ENCODE measurements at regions of chr10 and their contacts with region 1.

Region 1: GRCh38 chr10:130127364-130128061 is 8.7 kb upstream of the GLRX3 start:
- DNase-seq: peak in 8 of 9 donors; percentile 24 to 60 (median 46)
- ATAC-seq: peak; percentile 92
- H3K4me3 ChIP-seq: no peak overlapping the region
- H3K4me3 Mint-ChIP-seq: peak overlapping the region in 2 of 10 donors; percentile 19 to 22
- H3K27ac ChIP-seq: no peak overlapping the region
- H3K27ac Mint-ChIP-seq: no peak overlapping the region
- H3K4me1 ChIP-seq: no peaks in the 10 kb centered on the region
- H3K4me1 Mint-ChIP-seq: peaks cover 0 to 10% (median 7%) of the 10 kb centered on the region in 7 donors
- H3K27me3 ChIP-seq: no peaks in the 10 kb centered on the region
- H3K27me3 Mint-ChIP-seq: peaks cover 9 to 53% (median 17%) of the 10 kb centered on the region in 5 donors

Region 2: GRCh38 chr10:128631801-128632241 is 1495.7 kb before region 1 on chr10:
- CTCF ChIA-PET with region 1: no interaction called
- POLR2A ChIA-PET with region 1: no interaction called
- intact Hi-C with region 1: loop called in 1 of 2 experiments (anchors 5 kb)
- DNase-seq: no peak
- ATAC-seq: no peak
- H3K4me3 ChIP-seq: no peak overlapping the region
- H3K4me3 Mint-ChIP-seq: no peak overlapping the region
- H3K27ac ChIP-seq: no peak overlapping the region
- H3K27ac Mint-ChIP-seq: no peak overlapping the region
- H3K4me1 ChIP-seq: no peaks in the 10 kb centered on the region
- H3K4me1 Mint-ChIP-seq: peaks cover 0 to 4% (median 0%) of the 10 kb centered on the region in 7 donors
- H3K27me3 ChIP-seq: no peaks in the 10 kb centered on the region
- H3K27me3 Mint-ChIP-seq: peaks cover 2 to 49% (median 10%) of the 10 kb centered on the region in 5 donors

Region 3: DNA sequence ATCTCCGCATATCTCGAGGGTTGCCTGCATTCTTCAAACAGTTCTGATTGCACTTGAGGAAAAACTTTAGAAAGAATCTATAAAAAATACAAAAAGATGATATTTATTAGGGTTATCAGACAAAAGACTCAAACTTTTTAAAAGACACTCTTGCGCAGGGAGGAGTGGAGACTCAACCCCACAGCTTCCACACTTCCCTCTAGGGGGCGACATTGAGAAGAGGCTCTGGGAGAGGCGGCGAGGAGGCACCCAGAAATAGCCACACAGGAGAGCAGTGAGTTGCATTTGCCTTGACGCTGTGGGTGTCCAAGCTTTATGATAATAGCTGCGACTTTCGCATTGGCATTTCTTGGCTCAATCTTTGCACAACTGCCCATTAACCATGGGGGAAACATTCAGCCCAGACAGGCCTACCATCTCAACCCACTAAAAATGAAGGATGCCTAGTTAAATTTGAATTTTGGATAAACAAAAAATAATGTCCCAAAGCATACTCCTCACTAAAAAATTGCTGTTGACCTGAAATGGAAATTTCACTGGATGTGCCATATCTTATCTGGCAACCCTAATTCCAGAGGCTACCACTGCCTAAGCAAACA is 249.6 kb before region 1 on chr10:
- CTCF ChIA-PET with region 1: no interaction called
- POLR2A ChIA-PET with region 1: no interaction called
- intact Hi-C with region 1: loop called in 1 of 2 experiments (anchors 2 kb)
- DNase-seq: peak in 7 of 9 donors; percentile 8 to 39 (median 29)
- ATAC-seq: peak; percentile 63
- H3K4me3 ChIP-seq: no peak overlapping the region
- H3K4me3 Mint-ChIP-seq: no peak overlapping the region
- H3K27ac ChIP-seq: no peak overlapping the region
- H3K27ac Mint-ChIP-seq: no peak overlapping the region
- H3K4me1 ChIP-seq: no peaks in the 10 kb centered on the region
- H3K4me1 Mint-ChIP-seq: no peaks in the 10 kb centered on the region
- H3K27me3 ChIP-seq: no peaks in the 10 kb centered on the region
- H3K27me3 Mint-ChIP-seq: peaks cover 0 to 8% (median 3%) of the 10 kb centered on the region in 5 donors

Region 4: GRCh38 chr10:129912166-129912917 is 215.2 kb before region 1 on chr10:
- CTCF ChIA-PET with region 1: no interaction called
- POLR2A ChIA-PET with region 1: no interaction called
- intact Hi-C with region 1: no loop called
- DNase-seq: no peak
- ATAC-seq: no peak
- H3K4me3 ChIP-seq: no peak overlapping the region
- H3K4me3 Mint-ChIP-seq: no peak overlapping the region
- H3K27ac ChIP-seq: no peak overlapping the region
- H3K27ac Mint-ChIP-seq: no peak overlapping the region
- H3K4me1 ChIP-seq: no peaks in the 10 kb centered on the region
- H3K4me1 Mint-ChIP-seq: no peaks in the 10 kb centered on the region
- H3K27me3 ChIP-seq: no peaks in the 10 kb centered on the region
- H3K27me3 Mint-ChIP-seq: no peaks in the 10 kb centered on the region

Measured in naive thymus-derived CD4-positive, alpha-beta T cell (primary cell).